ENCODE measurements at regions of chr7 and their contacts with region 1.

Region 1: DNA sequence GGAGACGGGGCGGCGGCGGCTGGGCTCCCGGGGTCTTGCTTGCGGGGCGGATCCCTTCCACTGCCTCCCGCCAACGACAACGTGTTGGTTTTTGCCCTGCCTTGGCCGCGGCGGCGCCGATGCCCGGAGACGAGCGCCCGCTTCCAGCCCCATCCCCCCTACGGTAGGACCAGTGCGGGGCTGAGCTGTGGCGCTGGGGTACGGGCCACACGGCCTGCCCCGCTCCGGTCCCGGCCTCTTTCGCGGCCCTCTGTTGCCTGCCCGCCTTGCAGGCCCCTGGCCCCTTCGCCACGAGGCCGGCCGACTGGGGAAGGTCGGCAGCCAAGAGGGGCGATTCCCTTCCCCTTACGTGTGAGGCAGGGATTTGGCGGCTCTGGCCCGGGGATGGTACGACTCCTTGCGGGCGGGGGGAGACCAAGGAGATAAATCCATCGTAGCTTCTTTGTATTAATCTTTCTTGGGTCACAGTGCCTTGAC is 488 bp downstream of the EIF4H start:
- DNase-seq: peak; percentile 51

Region 2: GRCh38 chr7:73482746-73483145 is 691.9 kb before region 1 on chr7:
- in situ Hi-C with region 1: no loop called
- DNase-seq: no peak

Region 3: DNA sequence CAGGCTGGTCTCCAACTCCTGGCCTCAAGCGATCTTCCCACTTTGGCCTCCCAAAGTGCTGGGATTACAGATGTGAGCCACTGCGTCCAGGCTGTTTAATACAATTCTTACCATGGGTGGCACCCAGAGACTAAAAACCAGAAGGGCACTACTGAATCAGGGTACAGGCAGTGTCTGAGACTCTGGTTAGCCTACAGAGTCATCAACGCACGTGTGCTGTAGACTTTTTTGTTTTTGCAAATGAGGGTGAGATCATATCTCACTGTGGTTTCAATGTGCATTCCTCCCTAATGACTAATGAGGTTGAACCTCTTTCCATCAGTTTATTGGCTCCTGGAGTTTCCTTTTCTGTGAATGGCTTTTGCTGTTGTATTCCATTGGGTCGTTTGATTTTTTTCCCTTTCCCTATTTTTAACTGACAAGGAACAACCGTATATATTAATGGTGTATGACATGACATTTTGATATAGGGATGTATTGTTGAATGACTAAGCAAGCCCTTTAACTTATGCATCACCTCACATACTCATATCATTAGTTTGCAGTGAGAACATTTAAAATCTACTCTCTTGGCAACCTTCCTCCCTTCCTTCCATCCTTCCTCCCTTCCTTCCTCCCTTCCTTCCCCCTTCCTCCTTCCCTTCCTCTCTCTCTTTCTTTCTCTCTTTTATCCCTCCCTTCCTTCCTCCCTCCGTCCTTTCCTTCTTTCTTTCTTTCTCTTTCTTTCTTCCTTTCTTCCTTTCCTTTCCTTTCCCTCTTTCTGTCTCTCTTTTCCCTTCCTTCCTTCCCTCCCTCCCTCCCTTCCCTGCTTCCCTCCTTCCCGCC is 323.0 kb before region 1 on chr7:
- in situ Hi-C with region 1: loop called (anchors 25 kb)
- DNase-seq: peak; percentile 78

Region 4: GRCh38 chr7:74061840-74062539 is 112.7 kb before region 1 on chr7:
- in situ Hi-C with region 1: loop called (anchors 25 kb)
- DNase-seq: peak; percentile 87

Measured in KBM-7 (cell line).